Heart left ventricle (tissue), 16 donors: ENCODE measurements at regions of chr2 and their contacts with region 1.

Region 1: GRCh38 chr2:120680136-120680761 is 55.4 kb upstream of the GLI2 start:
- DNase-seq: peak; percentile 76 to 89 (median 79)
- ATAC-seq: peak; percentile 49 to 89 (median 78)
- H3K4me3 ChIP-seq: no peak overlapping the region
- H3K27ac ChIP-seq: no peak overlapping the region
- H3K4me1 ChIP-seq: peaks cover 0 to 5% (median 0%) of the 10 kb centered on the region in 12 donors
- H3K27me3 ChIP-seq: peaks cover 0 to 39% (median 9%) of the 10 kb centered on the region in 9 donors
- CTCF ChIP-seq: peak; percentile 32 to 62 (median 49)
- POLR2A ChIP-seq: no peak

Region 2: GRCh38 chr2:120109186-120110061 is 570.8 kb before region 1 on chr2:
- intact Hi-C with region 1: loop called in 2 of 10 experiments (anchors 5 to 10 kb)
- DNase-seq: no peak
- ATAC-seq: peak; percentile 5 to 65 (median 48)
- H3K4me3 ChIP-seq: no peak overlapping the region
- H3K27ac ChIP-seq: no peak overlapping the region
- H3K4me1 ChIP-seq: peaks cover 3 to 29% (median 19%) of the 10 kb centered on the region in 12 donors
- H3K27me3 ChIP-seq: no peaks in the 10 kb centered on the region
- CTCF ChIP-seq: peak in 11 of 12 donors; percentile 20 to 58 (median 50)
- POLR2A ChIP-seq: no peak

Region 3: DNA sequence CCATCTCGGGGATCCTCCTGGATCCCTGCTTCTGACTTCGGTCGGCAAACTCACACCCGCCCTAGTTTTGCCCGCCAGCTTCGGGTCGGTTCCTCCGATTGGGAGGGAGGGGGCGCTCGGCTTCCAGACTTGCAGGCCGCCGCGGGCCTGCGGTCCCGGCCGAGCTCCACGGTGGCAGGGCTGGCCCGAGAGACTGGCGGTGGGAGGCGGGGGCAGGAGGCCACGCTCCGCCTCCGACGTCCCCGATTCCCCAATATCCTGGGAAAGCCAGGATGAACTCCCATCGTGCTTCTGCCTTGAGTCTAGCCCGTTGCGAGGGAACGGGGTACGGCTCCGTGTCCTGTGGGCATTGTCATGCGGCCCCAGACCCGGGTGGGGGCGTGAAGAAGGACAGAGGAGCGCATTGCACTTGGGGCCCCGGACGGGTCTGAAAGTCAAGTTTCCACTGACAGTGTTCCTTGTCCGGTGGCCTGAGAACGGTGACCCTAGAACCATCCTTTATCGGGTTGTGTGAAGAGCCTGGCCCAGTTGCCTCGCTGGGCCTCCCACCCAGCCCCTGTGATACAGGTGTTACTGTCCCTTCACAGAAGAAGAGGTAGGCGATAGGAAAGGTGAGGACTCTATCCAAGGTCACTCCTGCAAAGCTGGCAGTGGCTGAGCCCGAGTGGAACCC is 336.7 kb before region 1 on chr2:
- intact Hi-C with region 1: loop called (anchors 1 to 2 kb)
- DNase-seq: peak; percentile 83 to 90 (median 85)
- ATAC-seq: peak; percentile 75 to 92 (median 90)
- H3K4me3 ChIP-seq: peak overlapping the region in 10 of 12 donors; percentile 8 to 73 (median 58)
- H3K27ac ChIP-seq: peak overlapping the region in 4 of 12 donors; percentile 55 to 71 (median 65)
- H3K4me1 ChIP-seq: peaks cover 0 to 51% (median 27%) of the 10 kb centered on the region in 12 donors
- H3K27me3 ChIP-seq: peaks cover 21 to 81% (median 52%) of the 10 kb centered on the region in 9 donors
- CTCF ChIP-seq: peak; percentile 68 to 95 (median 87)
- POLR2A ChIP-seq: no peak

Region 4: DNA sequence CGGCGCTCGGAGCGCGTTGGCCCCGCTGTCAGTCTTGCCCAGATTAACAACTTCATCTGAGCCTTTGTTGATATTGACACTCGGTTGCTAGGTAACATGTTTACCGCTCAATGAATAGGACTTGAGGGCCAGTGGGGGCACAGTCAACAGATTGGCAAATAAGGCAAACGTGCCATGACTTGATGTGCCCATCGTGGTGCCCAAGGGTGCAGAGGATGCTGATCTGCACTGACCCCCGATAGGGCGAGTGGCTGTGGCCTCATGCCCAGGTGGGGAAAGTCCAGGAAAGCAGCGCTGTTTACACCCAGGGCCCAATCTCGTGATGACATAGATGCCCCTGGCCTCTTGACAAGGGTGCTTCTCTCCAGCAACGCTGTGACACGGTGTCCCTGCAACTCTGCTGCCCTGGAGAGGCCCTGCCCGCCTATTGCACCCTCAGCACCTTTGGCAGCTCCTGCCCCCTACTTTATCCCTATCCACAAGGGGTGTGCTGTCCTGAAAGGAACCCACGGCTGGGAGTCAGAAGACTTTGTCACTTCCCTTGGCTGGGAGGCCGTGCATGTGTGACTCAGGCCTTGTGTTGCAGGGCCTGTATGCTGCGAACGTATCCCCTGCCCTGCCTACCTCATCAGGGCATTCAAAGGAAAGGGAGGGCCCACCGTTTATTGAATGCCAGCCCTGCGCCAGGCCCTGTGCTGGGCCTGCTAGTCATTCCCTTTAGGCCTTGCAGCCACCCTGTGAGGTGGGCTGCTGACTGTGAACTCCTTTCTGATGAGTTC is 176.3 kb before region 1 on chr2:
- intact Hi-C with region 1: loop called in 3 of 10 experiments (anchors 5 to 10 kb)
- DNase-seq: peak; percentile 55 to 92 (median 82)
- ATAC-seq: peak; percentile 91 to 96 (median 92)
- H3K4me3 ChIP-seq: no peak overlapping the region
- H3K27ac ChIP-seq: peak overlapping the region in 11 of 12 donors; percentile 11 to 87 (median 72)
- H3K4me1 ChIP-seq: peaks cover 0 to 22% (median 8%) of the 10 kb centered on the region in 12 donors
- H3K27me3 ChIP-seq: no peaks in the 10 kb centered on the region
- CTCF ChIP-seq: peak in 4 of 12 donors; percentile 8 to 25 (median 16)
- POLR2A ChIP-seq: peak in 1 of 2 donors; percentile 14

Region 5: DNA sequence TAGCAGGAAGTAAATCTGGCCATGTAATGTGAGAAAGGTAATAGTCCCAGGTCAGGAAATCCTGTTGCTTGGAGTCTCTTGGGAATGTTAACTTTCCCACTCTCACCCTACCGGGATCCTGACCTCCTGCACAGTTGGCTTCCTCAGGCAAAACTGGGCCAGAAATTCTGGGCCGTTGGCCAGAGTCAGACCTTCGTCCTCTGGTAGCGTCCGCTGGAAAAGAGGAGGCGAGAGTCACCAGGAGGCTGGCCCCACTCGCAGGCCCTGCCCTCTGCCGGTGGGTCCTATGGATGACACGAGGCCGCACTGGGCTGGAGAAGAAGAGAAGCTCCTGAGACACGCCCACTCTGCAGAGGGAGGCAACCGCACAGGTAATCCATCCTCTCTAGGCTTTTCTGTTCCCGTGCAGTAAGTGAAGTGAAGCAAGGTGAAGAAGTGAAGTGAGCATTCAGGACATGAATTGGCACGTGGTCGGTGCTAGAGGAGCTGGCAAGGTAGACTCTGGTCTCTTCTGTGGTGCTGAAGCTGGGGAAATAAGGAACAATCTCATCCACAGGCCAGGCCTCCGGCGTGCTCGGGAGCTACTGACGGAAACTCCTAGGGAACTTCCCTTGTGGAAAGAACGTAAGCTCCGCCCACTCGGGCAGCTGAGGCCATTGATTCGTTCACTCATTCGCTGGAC is 127.3 kb before region 1 on chr2:
- intact Hi-C with region 1: loop called in 4 of 10 experiments (anchors 5 to 10 kb)
- DNase-seq: peak; percentile 92 to 95 (median 93)
- ATAC-seq: peak; percentile 91 to 96 (median 92)
- H3K4me3 ChIP-seq: peak overlapping the region in 2 of 12 donors; percentile 5 to 9
- H3K27ac ChIP-seq: peak overlapping the region in 10 of 12 donors; percentile 37 to 81 (median 64)
- H3K4me1 ChIP-seq: peaks cover 9 to 43% (median 37%) of the 10 kb centered on the region in 12 donors
- H3K27me3 ChIP-seq: no peaks in the 10 kb centered on the region
- CTCF ChIP-seq: peak; percentile 57 to 93 (median 82)
- POLR2A ChIP-seq: no peak

Region 6: GRCh38 chr2:120564213-120565094 is 115.8 kb before region 1 on chr2:
- intact Hi-C with region 1: loop called in 4 of 10 experiments (anchors 5 to 10 kb)
- DNase-seq: no peak
- ATAC-seq: no peak
- H3K4me3 ChIP-seq: no peak overlapping the region
- H3K27ac ChIP-seq: peak overlapping the region in 6 of 12 donors; percentile 12 to 83 (median 76)
- H3K4me1 ChIP-seq: peaks cover 6 to 58% (median 26%) of the 10 kb centered on the region in 12 donors
- H3K27me3 ChIP-seq: no peaks in the 10 kb centered on the region
- CTCF ChIP-seq: no peak
- POLR2A ChIP-seq: no peak

Region 7: DNA sequence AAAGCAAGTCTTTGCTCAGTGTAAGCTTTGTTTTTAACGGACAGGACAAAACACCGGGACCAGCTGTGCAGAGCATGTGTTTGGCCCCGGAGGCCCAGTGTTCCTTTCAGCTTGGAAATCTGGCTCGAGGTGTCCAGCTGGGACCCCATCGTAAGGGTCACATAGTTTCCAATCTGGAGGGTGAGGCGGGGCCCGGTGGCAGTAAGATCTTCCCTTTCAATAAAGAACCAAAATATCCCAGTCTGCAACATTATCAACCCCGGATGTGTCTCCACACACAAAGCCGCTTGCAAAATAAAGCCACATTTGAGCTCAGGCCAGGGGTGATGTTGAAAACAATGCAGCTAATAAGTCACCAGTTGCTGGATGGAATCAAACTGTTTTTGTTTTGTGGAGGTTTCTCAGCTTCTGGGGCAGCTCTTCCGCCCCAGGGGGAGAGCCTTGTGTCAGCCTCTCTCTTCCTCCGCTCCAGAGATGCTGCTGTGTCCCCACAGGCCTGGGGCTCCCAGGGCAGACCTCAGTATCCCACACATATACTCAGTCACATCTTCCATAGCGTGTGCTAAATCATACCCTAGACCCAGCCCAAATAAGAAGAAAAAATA is 83.2 kb before region 1 on chr2:
- intact Hi-C with region 1: loop called in 1 of 10 experiments (anchors 10 kb)
- DNase-seq: peak in 4 of 5 donors; percentile 40 to 60 (median 48)
- ATAC-seq: peak; percentile 57 to 78 (median 64)
- H3K4me3 ChIP-seq: no peak overlapping the region
- H3K27ac ChIP-seq: peak overlapping the region in 6 of 12 donors; percentile 17 to 80 (median 69)
- H3K4me1 ChIP-seq: peaks cover 0 to 35% (median 21%) of the 10 kb centered on the region in 12 donors
- H3K27me3 ChIP-seq: peaks cover 0 to 2% (median 0%) of the 10 kb centered on the region in 9 donors
- CTCF ChIP-seq: no peak
- POLR2A ChIP-seq: no peak